Spleen (tissue), 13 donors: ENCODE measurements at regions of chr13 and their contacts with region 1.

Region 1: DNA sequence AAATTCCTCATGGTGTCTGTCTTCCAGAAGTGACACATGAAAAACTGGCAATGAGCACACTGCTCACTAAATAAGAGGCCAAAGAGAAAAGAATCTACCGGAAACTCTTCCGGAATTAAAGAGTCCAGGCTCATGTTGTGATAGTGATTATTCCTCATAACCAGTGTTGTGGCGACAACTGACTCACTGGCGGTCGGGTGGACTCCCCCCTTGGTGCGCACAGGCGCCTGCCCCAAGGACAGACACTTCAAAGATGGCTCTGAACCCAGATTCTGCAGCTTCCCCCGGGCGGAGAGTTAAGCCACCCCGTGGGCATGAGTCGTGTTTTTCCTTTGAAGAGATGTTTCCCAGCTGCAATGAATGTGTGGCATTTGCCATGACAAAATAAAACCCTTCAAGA is 10.3 kb downstream of the IL17D start:
- DNase-seq: no peak
- H3K4me3 ChIP-seq: no peak overlapping the region
- H3K27ac ChIP-seq: no peak overlapping the region
- H3K4me1 ChIP-seq: peaks cover 5 to 16% (median 12%) of the 10 kb centered on the region in 6 donors
- H3K27me3 ChIP-seq: peaks cover 0 to 11% (median 0%) of the 10 kb centered on the region in 7 donors
- CTCF ChIP-seq: no peak
- POLR2A ChIP-seq: no peak

Region 2: DNA sequence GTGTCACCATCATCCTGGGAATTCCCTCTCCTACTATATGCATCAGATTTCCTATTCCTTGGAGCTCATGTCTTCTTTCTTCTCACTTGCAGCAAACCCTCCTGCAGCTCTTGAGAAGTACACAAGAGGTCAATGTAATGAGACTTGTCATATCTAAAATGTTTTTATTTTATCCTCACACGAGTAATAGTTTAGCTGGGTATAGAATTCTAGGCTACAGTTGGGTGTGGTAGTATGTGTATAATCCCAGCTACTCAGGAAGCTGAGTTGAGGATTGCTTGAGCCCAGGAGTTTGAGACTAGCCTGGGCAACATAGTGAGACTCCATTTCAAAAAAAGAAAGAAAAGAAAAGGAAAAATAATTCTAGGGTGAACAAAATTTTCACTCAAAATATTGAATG is 35.6 kb after region 1 on chr13:
- intact Hi-C with region 1: no loop called
- DNase-seq: no peak
- H3K4me3 ChIP-seq: no peak overlapping the region
- H3K27ac ChIP-seq: no peak overlapping the region
- H3K4me1 ChIP-seq: no peaks in the 10 kb centered on the region
- H3K27me3 ChIP-seq: no peaks in the 10 kb centered on the region
- CTCF ChIP-seq: no peak
- POLR2A ChIP-seq: no peak

Region 3: DNA sequence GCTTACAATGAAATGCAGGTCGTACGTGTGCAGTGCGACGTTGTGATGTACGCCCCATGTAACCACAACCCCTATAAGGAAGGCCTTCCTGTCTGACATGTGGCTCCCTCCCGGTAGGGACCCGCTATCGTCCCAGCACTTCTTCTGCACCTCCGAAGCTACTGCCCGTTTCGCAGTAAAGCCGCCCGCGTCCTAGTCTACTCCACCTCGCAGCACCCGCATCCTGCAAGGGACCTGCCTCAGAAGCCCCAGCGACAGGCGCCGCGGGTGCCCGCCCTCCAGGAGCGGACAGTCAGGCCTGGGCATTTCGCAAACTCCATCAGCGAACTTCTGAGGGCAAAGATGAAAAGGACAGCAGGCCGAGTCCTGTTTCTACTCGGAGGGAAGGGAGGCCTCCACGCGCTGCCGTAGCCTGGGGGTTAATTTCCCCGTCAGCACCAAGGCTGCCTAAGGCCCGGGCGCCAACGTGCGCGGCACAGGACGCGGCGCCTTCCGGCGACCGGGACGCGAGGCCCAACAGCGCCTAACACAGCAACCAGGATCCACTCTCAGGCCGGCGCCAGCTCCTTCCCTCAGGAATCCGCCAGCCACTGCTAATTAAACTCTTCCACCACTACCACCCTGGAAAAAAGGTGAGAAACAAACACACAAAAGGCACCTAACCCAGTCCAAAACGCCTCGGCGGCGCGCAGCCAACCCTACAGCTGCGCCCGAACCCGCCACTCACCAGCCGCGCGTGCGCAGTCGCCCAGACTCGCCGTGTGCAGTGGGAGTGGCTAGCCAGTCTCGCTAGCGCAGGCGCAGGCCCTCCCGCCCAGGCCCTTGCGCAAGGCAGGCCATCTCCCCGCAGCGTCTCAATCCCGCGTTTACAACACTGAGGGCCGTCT is 59.7 kb after region 1 on chr13 and contains the start of gene EEF1AKMT1:
- intact Hi-C with region 1: loop called (anchors 10 kb)
- DNase-seq: peak; percentile 98
- H3K4me3 ChIP-seq: peak within 1 kb of the TSS; percentile 61 to 79 (median 66)
- H3K27ac ChIP-seq: peak within 1 kb of the TSS; percentile 87 to 96 (median 92)
- H3K4me1 ChIP-seq: peaks cover 0 to 28% (median 14%) of the 10 kb centered on the region in 6 donors
- H3K27me3 ChIP-seq: no peaks in the 10 kb centered on the region
- CTCF ChIP-seq: peak in 3 of 11 experiments; percentile 9 to 24 (median 12)
- POLR2A ChIP-seq: peak in 2 of 3 donors; percentile 74 to 90
- total RNA-seq, gene EEF1AKMT1: 3.8 to 8.9 (median 7.0) TPM

Region 4: DNA sequence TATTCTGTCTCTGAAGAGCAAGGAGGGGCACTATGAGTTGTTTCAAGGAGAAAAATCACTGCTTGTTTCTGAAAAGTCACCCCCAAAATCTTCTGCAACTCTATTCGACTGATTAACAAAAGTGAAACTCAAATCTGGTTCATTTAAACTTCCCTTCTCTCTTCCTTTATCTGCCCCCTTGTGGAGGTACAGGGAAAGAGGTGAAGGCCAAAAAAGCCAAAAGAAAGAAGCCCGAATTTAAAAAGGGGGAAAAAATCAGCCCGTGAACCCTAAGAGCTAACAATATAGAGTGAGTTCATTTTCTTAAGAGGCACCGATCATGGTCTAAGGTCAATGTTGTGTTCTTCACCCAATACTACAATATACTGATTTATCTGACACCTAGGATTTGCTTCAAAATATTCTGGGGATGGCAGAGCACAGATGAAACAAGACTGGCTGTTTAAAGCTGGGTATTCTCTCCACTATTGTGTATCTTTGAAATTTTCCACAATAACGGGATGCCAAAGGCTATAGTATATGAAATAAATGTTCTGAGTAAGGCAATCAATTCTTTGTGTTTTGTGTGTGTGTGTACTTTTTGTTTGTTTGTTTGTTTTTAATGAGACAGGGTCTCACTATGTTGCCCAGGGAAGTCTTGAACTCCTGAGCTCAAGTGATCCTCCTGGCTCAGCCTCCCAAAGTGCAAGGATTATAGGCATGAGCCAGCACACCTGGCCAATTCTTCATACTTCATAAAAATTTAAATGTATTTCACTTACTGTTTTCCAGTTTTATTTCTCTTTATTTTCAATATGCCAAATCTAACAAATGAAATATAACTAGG is 115.0 kb after region 1 on chr13:
- intact Hi-C with region 1: loop called (anchors 5 kb)
- DNase-seq: no peak
- H3K4me3 ChIP-seq: peak overlapping the region in 2 of 8 donors; percentile 12 to 40
- H3K27ac ChIP-seq: peak overlapping the region in 4 of 8 donors; percentile 18 to 46 (median 33)
- H3K4me1 ChIP-seq: peaks cover 0 to 24% (median 10%) of the 10 kb centered on the region in 6 donors
- H3K27me3 ChIP-seq: no peaks in the 10 kb centered on the region
- CTCF ChIP-seq: peak; percentile 61 to 87 (median 80)
- POLR2A ChIP-seq: no peak

Region 5: GRCh38 chr13:20924758-20925394 is 211.1 kb after region 1 on chr13:
- intact Hi-C with region 1: loop called (anchors 10 kb)
- DNase-seq: peak; percentile 75
- H3K4me3 ChIP-seq: no peak overlapping the region
- H3K27ac ChIP-seq: no peak overlapping the region
- H3K4me1 ChIP-seq: no peaks in the 10 kb centered on the region
- H3K27me3 ChIP-seq: no peaks in the 10 kb centered on the region
- CTCF ChIP-seq: peak; percentile 32 to 72 (median 62)
- POLR2A ChIP-seq: no peak

Region 6: DNA sequence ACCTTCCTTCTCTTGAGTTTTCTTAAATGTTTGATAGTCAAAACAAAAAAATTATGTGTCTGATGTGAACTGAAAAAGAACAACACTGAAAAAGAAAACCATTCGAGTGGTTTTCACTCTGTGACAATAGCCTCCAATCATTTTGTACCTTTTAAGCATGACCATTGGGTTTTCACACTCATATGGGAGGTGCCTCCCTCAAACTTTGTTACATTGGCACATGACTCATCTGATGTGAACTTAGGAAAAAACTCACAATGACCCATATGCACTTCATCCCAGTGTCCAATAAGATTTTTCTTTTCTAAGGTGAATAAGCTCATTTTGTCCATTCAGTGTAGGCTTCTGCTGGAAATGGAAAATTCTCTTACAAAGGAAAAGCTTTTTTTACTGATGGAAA is 255.4 kb after region 1 on chr13:
- intact Hi-C with region 1: no loop called
- DNase-seq: no peak
- H3K4me3 ChIP-seq: no peak overlapping the region
- H3K27ac ChIP-seq: no peak overlapping the region
- H3K4me1 ChIP-seq: no peaks in the 10 kb centered on the region
- H3K27me3 ChIP-seq: no peaks in the 10 kb centered on the region
- CTCF ChIP-seq: no peak
- POLR2A ChIP-seq: no peak